Panc1 (cell line): ENCODE measurements at regions of chr2 and their contacts with region 1.

Region 1: GRCh38 chr2:197276156-197276555 is 34.4 kb downstream of the ANKRD44 start:
- DNase-seq: no peak
- ATAC-seq: no peak
- H3K4me3 ChIP-seq: no peak overlapping the region
- H3K27ac ChIP-seq: no peak overlapping the region
- H3K4me1 ChIP-seq: no peaks in the 10 kb centered on the region; the same call in 1 of the 2 replicates
- H3K27me3 ChIP-seq: no peaks in the 10 kb centered on the region
- CTCF ChIP-seq: no peak

Region 2: GRCh38 chr2:197357991-197358390 is 81.8 kb after region 1 on chr2:
- CTCF ChIA-PET with region 1: no interaction called
- POLR2A ChIA-PET with region 1: interaction called, 11 read pairs
- in situ Hi-C with region 1: no loop called
- intact Hi-C with region 1: no loop called
- DNase-seq: no peak
- ATAC-seq: no peak
- H3K4me3 ChIP-seq: no peak overlapping the region
- H3K27ac ChIP-seq: no peak overlapping the region
- H3K4me1 ChIP-seq: no peaks in the 10 kb centered on the region
- H3K27me3 ChIP-seq: no peaks in the 10 kb centered on the region
- CTCF ChIP-seq: no peak